Head of caudate nucleus (tissue), 42 donors: ENCODE measurements at regions of chr1 and their contacts with region 1.

Region 1: DNA sequence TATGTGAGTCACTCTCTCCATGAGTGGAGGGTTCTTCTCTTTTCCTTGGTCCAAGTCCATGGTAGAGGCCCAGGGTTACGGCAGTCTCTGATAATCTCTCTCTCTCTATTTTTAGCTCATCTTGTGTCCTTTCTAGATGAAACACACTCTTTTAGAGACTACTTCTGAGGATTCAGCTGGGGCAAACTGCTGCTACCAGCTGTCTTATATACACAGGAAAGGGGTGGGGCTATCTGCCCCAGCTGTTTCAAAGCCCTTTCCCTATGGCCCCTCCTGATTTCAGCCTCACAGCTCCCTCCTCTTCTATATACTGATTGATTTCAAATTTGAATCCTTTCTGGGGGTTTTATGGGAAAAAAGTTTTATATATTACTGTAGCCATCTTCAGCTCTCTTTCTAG is 324.8 kb downstream of the RWDD3 start:
- DNase-seq: no peak

Region 2: DNA sequence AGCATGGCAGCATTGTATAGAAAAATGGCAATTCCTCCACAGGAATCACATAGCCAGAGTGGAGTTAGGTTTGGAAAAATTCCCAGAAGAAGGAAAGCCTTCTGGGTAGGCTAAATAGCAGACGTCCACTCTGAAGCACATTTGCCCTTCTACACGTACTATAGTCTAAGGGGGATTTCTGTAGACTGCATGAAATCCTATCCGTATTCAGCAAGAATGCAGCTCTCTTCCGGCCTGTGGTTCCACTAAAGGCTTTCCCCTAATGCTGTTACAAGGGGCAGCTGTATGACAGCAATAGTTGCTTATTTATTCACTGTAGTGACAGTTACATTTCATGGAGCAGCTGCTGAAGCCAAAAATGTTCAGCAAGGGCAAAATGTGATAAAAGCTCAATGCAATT is 61.2 kb before region 1 on chr1:
- intact Hi-C with region 1: loop called (anchors 10 kb)
- DNase-seq: no peak

Region 3: DNA sequence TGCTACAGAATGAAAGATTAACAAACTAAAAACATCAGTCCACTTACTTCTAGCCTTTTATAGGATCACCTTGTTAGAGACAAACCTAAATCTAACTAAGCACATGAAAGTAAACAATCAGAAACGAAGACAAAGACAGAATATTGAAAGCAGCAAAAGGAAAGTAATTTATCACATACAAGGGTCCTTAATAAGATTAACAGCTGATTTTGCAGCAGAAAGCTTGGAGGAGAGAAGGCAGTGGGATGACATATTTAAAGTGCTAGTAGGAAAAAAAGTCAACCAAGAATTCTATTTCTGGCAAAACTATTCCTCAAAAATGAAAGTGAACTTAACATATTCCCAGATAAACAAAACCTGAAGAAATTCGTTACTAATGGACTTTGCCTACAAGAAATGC is 38.4 kb before region 1 on chr1:
- intact Hi-C with region 1: no loop called
- DNase-seq: no peak

Region 4: GRCh38 chr1:95615421-95615820 is 56.6 kb after region 1 on chr1:
- intact Hi-C with region 1: no loop called
- DNase-seq: no peak